Heart left ventricle (tissue), 16 donors: ENCODE measurements at regions of chr14 and their contacts with region 1.

Region 1: DNA sequence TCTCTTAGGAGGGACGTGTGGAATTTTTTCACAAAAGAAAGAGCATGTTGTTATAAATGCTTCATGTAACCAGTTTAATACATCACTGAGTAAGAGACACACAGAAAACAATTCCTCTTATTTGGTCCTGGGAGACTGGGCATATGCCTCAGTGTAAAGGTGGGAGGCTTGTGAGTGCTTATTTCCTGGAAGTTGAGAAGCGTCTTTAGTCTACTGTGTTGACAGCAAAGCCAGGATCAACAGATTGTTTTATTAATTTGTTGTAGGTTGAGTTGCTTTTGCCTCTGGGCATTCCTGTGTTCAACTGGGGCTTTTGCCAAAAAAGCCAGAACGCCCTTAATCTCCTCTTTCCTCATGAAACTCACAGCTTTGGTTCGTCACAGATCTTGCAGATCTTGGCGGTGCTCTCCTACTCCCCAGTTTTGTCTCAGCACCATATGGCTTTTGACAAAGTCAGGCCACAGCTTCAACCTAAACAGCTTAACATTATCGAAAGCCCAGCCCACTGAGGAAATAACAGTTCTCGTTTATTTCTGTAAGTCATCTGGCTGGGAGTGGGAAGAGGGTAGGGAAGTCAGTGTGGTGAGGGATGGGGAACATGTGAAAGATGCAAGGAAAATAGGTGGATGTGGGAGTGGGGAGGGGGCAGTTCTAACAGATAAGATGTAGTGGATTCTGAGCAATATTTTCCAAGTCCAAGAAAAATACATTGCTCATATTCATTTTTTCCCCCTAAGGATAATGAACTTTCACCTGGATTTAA is 227.2 kb downstream of the DACT1 start:
- DNase-seq: peak in 3 of 5 donors; percentile 20 to 33 (median 24)
- ATAC-seq: peak; percentile 29 to 69 (median 52)
- H3K4me3 ChIP-seq: no peak overlapping the region
- H3K27ac ChIP-seq: peak overlapping the region in 7 of 12 donors; percentile 11 to 70 (median 41)
- H3K4me1 ChIP-seq: peaks cover 0 to 10% (median 0%) of the 10 kb centered on the region in 12 donors
- H3K27me3 ChIP-seq: no peaks in the 10 kb centered on the region
- CTCF ChIP-seq: no peak
- POLR2A ChIP-seq: no peak

Region 2: DNA sequence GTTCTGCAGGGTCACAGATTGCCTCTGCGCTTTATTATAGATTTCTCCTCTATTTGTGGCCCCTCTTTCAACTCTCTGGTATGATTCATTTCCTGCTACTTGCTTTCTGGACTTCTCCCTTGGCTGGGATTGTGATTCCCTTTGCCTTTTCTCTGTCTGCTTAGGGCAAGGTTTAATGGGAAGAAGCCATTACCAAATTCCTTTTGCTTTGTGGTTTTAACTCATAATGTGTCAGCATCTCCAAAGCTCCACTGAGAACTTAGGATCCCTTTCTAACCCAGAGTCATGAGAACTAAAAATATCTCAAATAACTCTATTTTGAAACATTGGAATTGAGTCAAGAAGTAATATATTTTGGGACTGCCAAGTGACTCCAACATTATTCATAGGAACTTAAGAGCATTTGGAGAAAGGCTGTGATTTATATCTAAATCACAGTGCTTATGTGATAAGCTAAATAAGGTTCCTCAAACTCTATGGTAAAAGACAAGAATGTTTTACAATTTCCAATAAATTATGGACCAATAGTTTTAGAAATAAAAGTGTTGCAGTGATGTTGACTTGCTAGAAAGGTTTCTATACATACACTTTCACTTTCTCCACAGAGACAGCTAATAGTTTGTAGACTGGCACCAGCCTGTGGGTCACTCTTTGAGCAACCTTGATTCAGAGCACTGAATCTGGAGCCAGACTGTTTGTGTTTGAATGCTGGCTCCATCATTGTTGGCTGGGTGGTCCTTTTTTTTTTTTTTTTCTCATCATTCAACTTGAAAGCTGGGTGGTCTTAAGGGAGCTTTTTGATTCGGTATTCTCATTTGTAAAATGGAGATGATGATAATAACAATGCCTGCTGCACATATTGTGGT is 133.2 kb before region 1 on chr14:
- intact Hi-C with region 1: loop called in 1 of 10 experiments (anchors 10 kb)
- DNase-seq: no peak
- ATAC-seq: peak in 3 of 4 donors; percentile 50 to 91 (median 64)
- H3K4me3 ChIP-seq: no peak overlapping the region
- H3K27ac ChIP-seq: peak overlapping the region in 4 of 12 donors; percentile 12 to 38 (median 26)
- H3K4me1 ChIP-seq: peaks cover 0 to 30% (median 3%) of the 10 kb centered on the region in 12 donors
- H3K27me3 ChIP-seq: no peaks in the 10 kb centered on the region
- CTCF ChIP-seq: no peak
- POLR2A ChIP-seq: no peak